ENCODE measurements at regions of chr19 and their contacts with region 1.

Region 1: DNA sequence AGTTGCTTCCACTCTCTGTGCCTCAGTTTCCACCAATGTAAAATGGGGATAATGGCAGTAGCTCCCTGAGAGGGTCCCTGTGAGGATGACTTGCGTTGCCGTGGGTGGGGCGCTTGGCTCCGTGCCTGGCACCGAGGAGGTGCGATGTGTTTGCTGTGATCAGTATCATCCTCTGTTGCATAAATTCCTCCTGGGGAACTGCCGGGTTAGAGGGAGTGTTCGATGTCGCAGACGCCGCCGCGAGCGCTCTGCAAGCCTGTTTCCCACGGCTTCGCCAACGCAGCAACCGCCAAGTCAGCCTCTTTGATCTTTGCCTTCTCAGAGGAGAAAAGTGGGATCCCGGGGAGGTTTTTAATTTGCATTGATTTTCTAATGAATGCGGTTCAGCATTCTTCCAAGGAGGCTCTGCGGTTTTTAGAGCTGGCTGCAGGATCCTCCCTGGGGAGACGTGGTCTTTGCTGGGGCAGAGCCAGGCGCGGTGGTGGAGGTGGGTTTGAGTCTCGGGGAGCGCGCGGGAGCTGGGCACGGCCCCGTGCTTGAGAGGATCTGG is 7.6 kb downstream of the GPR32 start:
- DNase-seq: no peak
- H3K4me3 Mint-ChIP-seq: no peak overlapping the region
- H3K27ac Mint-ChIP-seq: no peak overlapping the region
- H3K4me1 Mint-ChIP-seq: peaks cover 2% of the 10 kb centered on the region
- H3K27me3 Mint-ChIP-seq: peaks cover 49% of the 10 kb centered on the region

Region 2: GRCh38 chr19:50537762-50538230 is 240.0 kb before region 1 on chr19:
- intact Hi-C with region 1: loop called (anchors 1 kb)
- DNase-seq: peak; percentile 88
- H3K4me3 Mint-ChIP-seq: no peak overlapping the region
- H3K27ac Mint-ChIP-seq: no peak overlapping the region
- H3K4me1 Mint-ChIP-seq: no peaks in the 10 kb centered on the region
- H3K27me3 Mint-ChIP-seq: no peaks in the 10 kb centered on the region

Region 3: DNA sequence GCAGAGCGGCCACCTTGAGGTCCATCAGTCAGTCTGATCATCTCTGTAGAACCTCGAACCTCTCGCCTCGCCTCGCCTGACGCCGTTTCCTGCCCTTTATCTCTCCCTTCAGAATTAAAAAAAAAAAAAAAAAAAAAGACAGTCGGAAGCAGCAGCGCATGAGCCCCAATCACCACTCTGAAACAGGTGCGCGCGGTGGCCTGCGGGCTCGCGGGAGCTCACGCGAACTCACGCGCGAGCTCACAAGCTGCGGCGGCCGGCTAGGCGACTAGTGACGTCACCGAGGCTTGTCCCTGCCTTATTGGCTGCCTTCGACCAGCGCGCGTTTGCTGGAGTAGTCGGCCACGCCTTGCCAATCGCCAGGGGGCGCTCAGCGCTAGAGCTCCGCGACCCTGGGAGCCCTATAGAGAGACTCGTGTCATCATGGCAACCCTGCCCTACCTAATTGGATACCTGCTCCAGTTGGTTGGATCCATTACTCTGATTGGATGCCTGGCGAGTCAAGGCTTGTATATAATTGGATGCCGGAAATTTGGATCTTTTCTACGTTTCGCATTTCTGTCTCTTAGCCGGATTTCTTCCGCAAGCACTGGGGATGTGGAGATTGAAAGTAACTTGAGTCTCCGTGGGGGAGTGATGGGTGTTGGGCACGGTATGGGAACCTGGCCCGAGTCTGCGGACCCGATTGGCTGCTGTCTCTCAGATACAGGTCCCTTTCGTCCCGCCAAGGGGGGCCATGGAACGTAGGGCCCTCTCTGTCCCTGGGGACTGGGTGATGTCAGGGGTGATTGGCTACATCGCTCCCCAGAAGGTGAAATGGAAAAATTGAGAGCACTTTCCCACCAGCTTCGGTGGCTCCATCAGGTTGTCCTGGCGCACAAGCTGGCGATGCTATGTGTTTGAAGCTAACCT is 169.7 kb before region 1 on chr19:
- intact Hi-C with region 1: loop called (anchors 2 kb)
- DNase-seq: peak; percentile 91
- H3K4me3 Mint-ChIP-seq: peak overlapping the region; percentile 14
- H3K27ac Mint-ChIP-seq: no peak overlapping the region
- H3K4me1 Mint-ChIP-seq: peaks cover 4% of the 10 kb centered on the region
- H3K27me3 Mint-ChIP-seq: peaks cover 3% of the 10 kb centered on the region

Region 4: GRCh38 chr19:50657712-50658440 is 120.0 kb before region 1 on chr19:
- intact Hi-C with region 1: loop called (anchors 2 kb)
- DNase-seq: peak; percentile 90
- H3K4me3 Mint-ChIP-seq: peak overlapping the region; percentile 86
- H3K27ac Mint-ChIP-seq: peak overlapping the region; percentile 90
- H3K4me1 Mint-ChIP-seq: peaks cover 15% of the 10 kb centered on the region
- H3K27me3 Mint-ChIP-seq: peaks cover 38% of the 10 kb centered on the region

Region 5: GRCh38 chr19:50705422-50706019 is 72.3 kb before region 1 on chr19:
- intact Hi-C with region 1: loop called (anchors 5 kb)
- DNase-seq: peak; percentile 78
- H3K4me3 Mint-ChIP-seq: no peak overlapping the region
- H3K27ac Mint-ChIP-seq: no peak overlapping the region
- H3K4me1 Mint-ChIP-seq: no peaks in the 10 kb centered on the region
- H3K27me3 Mint-ChIP-seq: peaks cover 14% of the 10 kb centered on the region

Region 6: GRCh38 chr19:50724522-50725217 is 53.2 kb before region 1 on chr19:
- intact Hi-C with region 1: loop called (anchors 1 kb)
- DNase-seq: peak; percentile 99
- H3K4me3 Mint-ChIP-seq: peak overlapping the region; percentile 93
- H3K27ac Mint-ChIP-seq: peak overlapping the region; percentile 81
- H3K4me1 Mint-ChIP-seq: peaks cover 25% of the 10 kb centered on the region
- H3K27me3 Mint-ChIP-seq: peaks cover 49% of the 10 kb centered on the region